Common myeloid progenitor, CD34-positive (primary cell): ENCODE measurements at regions of chr4 and their contacts with region 1.

Region 1: GRCh38 chr4:158787709-158788475 is 19.1 kb downstream of the FNIP2 start:
- DNase-seq: no peak
- H3K4me3 ChIP-seq: no peak overlapping the region
- H3K27ac ChIP-seq: no peak overlapping the region
- H3K4me1 ChIP-seq: peaks cover 18 to 62% (median 53%) of the 10 kb centered on the region in 4 experiments
- H3K27me3 ChIP-seq: no peaks in the 10 kb centered on the region

Region 2: DNA sequence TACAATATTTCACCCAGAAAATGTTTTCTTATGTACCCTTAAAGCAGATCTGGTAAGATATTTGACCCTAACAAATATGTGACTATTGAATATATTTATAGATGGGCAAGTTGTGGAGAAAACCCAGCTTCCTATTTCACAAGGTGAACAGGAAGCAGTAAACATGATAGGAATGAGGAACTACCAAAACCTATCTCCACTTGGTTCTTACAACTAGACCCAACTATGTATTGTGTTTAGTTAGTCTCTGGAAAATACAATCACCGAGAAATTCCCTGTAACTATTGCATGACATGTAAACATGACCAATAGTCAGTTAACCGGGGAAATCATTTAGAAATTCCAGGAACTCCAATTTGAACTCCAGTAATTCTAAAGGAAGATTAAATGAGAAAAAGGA is 274.6 kb before region 1 on chr4:
- CTCF ChIA-PET with region 1: no interaction called
- POLR2A ChIA-PET with region 1: no interaction called
- DNase-seq: peak; percentile 27 to 73 (median 54)
- H3K4me3 ChIP-seq: no peak overlapping the region
- H3K27ac ChIP-seq: no peak overlapping the region
- H3K4me1 ChIP-seq: peaks cover 3 to 36% (median 13%) of the 10 kb centered on the region in 4 experiments
- H3K27me3 ChIP-seq: no peaks in the 10 kb centered on the region

Region 3: DNA sequence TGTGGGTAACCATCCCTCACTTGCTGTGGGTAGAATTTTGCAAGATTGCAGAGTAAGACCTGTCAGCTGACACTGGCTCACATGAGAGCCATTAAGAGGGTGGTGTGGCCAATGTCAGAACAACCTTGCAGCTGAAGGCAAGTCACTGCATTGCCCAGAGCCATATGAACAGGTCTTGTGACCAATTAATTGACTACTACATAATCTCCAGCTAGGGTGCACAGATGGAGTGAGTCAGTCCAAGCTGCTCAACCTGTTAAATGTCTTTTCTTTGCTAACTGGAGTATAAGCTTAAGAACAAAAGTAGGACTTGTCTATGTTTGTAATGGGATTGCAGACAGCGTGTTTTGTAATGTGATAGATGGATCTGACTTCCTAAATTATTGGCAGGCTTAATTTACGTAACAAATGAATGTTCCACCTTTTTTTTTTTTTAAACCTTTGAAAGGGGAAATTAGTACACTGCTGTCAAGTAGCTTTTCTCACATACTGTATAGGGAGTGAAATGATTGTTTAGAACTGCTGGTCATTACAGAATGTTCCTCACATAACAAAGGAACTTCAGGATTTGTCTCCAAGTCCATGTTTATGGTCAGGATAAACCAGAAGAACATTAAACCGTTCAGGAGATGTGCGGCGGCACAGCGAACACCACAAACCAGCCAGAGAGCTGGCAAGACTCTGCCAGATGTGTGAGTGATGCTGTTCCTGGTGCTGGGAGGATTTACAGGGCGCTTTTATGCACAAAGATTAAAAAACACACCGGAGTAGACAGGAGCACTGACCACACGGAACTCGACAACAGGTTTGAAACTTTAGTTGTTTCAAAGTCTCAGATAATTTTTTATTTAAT is 18.0 kb after region 1 on chr4:
- CTCF ChIA-PET with region 1: interaction called, 13 read pairs
- POLR2A ChIA-PET with region 1: interaction called, 6 read pairs
- DNase-seq: peak in 2 of 3 donors; percentile 52 to 67
- H3K4me3 ChIP-seq: peak overlapping the region in 2 of 7 experiments; percentile 19 to 28
- H3K27ac ChIP-seq: no peak overlapping the region
- H3K4me1 ChIP-seq: peaks cover 23 to 66% (median 47%) of the 10 kb centered on the region in 4 experiments
- H3K27me3 ChIP-seq: no peaks in the 10 kb centered on the region